Uterus (tissue), 4 donors: ENCODE measurements at regions of chr7 and their contacts with region 1.

Region 1: GRCh38 chr7:25565949-25566348 is 337.7 kb upstream of the NPVF start:
- DNase-seq: peak; percentile 67 to 79
- H3K4me3 ChIP-seq: no peak overlapping the region
- H3K27ac ChIP-seq: peak overlapping the region; percentile 58 to 73
- H3K4me1 ChIP-seq: peaks cover 0 to 6% of the 10 kb centered on the region in 2 donors
- H3K27me3 ChIP-seq: no peaks in the 10 kb centered on the region
- CTCF ChIP-seq: peak; percentile 97 to 100 (median 99)
- POLR2A ChIP-seq: no peak

Region 2: GRCh38 chr7:25389489-25390106 is 176.4 kb before region 1 on chr7:
- intact Hi-C with region 1: loop called (anchors 5 kb)
- DNase-seq: no peak
- H3K4me3 ChIP-seq: no peak overlapping the region
- H3K27ac ChIP-seq: peak overlapping the region in 1 of 2 donors; percentile 8
- H3K4me1 ChIP-seq: peaks cover 0 to 21% of the 10 kb centered on the region in 2 donors
- H3K27me3 ChIP-seq: no peaks in the 10 kb centered on the region
- CTCF ChIP-seq: peak; percentile 67 to 77 (median 71)
- POLR2A ChIP-seq: no peak

Region 3: GRCh38 chr7:26477381-26477990 is 911.5 kb after region 1 on chr7:
- intact Hi-C with region 1: no loop called
- DNase-seq: no peak
- H3K4me3 ChIP-seq: no peak overlapping the region
- H3K27ac ChIP-seq: no peak overlapping the region
- H3K4me1 ChIP-seq: no peaks in the 10 kb centered on the region
- H3K27me3 ChIP-seq: no peaks in the 10 kb centered on the region
- CTCF ChIP-seq: no peak
- POLR2A ChIP-seq: no peak